WTC11 (cell line): ENCODE measurements at regions of chr11 and their contacts with region 1.

Region 1: DNA sequence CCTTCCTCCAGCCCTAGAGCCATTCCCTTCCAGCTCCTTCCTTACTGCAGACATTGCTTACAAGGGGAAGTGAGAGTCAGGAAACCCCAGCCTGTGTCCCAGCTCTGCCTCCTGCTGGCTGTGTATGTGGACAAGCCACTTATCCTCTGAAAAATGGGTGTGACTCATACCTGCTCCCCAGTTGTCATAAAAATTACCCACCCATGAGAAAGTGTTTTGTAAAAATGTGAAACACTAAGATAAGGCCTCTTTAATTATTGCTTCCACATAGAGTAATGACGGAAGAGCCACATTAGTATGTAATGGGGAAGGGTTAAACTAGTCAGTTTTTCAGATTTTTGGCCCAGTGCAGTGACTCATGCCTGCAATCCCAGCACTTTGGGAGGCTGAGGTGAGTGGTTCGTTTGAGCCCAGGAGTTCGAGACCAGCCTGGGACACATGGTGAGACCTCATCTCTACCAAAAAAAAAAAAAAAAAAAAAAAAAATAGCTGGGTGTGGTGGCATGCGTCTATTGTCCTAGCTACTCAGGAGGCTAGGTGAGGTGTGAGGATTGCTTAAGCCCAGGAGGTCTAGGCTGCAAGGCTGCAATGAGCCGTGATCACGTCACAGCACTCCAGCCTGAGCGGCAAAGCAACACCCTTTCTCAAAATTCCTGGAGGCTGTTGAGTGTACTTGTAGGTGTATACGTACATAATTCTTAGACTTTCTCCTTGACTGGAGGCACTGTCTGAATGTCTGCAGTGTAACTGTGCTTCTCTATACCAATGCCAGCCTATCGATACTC is 84.9 kb downstream of the CTTN start:
- DNase-seq: no peak
- ATAC-seq: peak; percentile 57
- H3K4me3 Mint-ChIP-seq: no peak overlapping the region
- H3K27ac Mint-ChIP-seq: no peak overlapping the region
- H3K4me1 Mint-ChIP-seq: no peaks in the 10 kb centered on the region
- H3K27me3 Mint-ChIP-seq: no peaks in the 10 kb centered on the region
- CTCF ChIP-seq: no peak

Region 2: GRCh38 chr11:70423523-70424505 is 59.5 kb before region 1 on chr11:
- CTCF ChIA-PET with region 1: no interaction called
- POLR2A ChIA-PET with region 1: no interaction called
- DNase-seq: no peak
- ATAC-seq: peak; percentile 71
- H3K4me3 Mint-ChIP-seq: no peak overlapping the region
- H3K27ac Mint-ChIP-seq: peak overlapping the region; percentile 83
- H3K4me1 Mint-ChIP-seq: peaks cover 18% of the 10 kb centered on the region
- H3K27me3 Mint-ChIP-seq: no peaks in the 10 kb centered on the region
- CTCF ChIP-seq: no peak

Region 3: GRCh38 chr11:70503458-70504221 is 20.4 kb after region 1 on chr11:
- CTCF ChIA-PET with region 1: interaction called, 10 read pairs
- POLR2A ChIA-PET with region 1: no interaction called
- DNase-seq: no peak
- ATAC-seq: peak; percentile 56
- H3K4me3 Mint-ChIP-seq: no peak overlapping the region
- H3K27ac Mint-ChIP-seq: peak overlapping the region; percentile 17; the same call in 1 of the 2 replicates
- H3K4me1 Mint-ChIP-seq: peaks cover 13% of the 10 kb centered on the region
- H3K27me3 Mint-ChIP-seq: no peaks in the 10 kb centered on the region
- CTCF ChIP-seq: no peak